Cardiac septum (tissue), 1 donor: ENCODE measurements at regions of chr3 and their contacts with region 1.

Region 1: DNA sequence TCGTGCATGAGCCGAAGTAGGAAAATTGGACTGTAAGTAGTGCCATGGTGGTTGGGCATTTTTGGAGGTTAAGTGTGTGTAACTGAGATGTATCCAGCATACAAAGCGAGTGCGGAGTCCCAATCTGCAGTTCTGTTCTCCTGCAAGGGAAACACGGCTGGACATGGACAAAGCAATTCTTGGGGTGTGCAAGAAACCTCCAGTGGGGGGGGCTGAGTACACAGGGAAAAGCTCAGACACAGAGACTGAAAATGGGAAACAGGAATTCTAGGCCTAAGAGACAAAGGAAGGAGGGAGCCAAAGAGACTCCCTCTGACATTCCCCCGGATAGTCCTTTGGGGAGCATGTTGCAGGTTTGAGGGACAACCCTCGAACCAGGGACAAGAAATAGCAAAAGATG is 83.2 kb upstream of the PLSCR4 start:
- DNase-seq: no peak

Region 2: GRCh38 chr3:146359841-146360240 is 25.7 kb after region 1 on chr3:
- intact Hi-C with region 1: no loop called
- DNase-seq: no peak

Region 3: DNA sequence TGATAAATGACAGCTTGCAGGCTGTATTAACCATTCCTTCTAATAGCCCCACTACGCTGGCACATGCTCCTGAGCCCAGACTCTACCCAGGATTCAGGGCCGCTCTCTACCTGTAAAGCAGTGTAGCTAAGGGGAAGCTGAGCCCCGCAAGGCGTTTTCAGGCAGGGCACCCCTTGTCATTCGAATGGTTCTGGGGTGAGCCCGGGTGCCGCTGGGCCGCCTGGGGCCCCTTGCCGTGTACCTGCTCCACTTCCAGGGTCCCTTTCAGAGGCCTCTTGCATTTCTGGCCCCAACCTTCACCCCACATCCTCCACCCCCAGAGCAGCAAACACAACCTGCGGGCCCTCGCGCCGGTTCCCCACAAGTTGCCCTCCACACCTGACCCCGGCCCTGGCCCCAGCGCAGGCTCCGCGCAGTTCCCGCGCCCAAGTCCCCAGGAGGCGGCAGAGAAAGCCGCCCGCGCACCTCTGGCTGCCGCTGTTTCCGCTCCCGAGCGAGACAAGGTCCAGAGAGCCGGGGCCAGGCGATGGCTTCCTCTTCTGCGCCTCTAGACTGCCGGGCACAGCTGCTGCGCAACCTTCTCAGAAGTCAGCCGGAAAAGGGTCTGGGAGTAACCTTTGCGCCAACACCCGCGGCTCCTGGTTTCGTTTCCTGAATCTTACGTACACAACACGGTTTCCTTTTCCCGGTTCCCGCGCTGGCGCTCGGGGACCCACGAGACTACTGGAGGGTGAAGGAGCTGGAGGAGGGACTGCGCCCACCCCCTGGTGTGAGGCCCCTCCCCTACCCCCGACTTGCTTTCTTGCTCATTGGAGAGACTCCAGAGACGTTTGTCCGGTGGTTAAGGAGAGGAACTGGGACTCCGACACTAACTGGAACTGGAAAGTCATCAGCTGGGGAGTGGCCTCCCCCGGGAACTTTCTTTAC is 210.1 kb after region 1 on chr3 and contains the start of gene PLSCR1:
- intact Hi-C with region 1: loop called (anchors 10 kb)
- DNase-seq: peak; percentile 96
- total RNA-seq, gene PLSCR1: 43.5 TPM

Region 4: DNA sequence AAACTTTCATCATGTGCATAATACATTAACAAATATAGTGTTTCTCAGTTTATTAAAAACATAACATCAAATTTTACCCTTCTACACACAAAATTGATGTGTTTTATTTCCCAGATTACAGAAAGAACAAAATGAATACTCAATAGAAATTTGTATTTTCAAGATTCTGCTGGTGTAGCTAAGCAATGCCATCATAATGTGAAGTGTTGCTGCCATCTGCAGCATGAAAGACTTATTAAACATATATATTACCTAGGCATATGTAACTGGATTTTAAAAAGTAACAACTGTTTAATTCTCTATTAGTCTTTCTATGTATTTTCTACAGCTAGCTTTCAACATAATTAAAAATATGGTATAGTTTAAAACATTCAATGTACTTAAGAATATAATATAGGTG is 243.5 kb after region 1 on chr3:
- intact Hi-C with region 1: loop called (anchors 5 kb)
- DNase-seq: no peak